Activated naive CD4-positive, alpha-beta T cell treated with anti-CD3 and anti-CD28 coated beads for 36 hours (primary cell): ENCODE measurements at regions of chr12 and their contacts with region 1.

Region 1: GRCh38 chr12:76920172-76921014 is 41.6 kb upstream of the CSRP2 start:
- DNase-seq: peak; percentile 45
- H3K4me3 Mint-ChIP-seq: no peak overlapping the region
- H3K27ac Mint-ChIP-seq: no peak overlapping the region
- H3K4me1 Mint-ChIP-seq: peaks cover 6% of the 10 kb centered on the region
- H3K27me3 Mint-ChIP-seq: peaks cover 2% of the 10 kb centered on the region

Region 2: GRCh38 chr12:76890151-76891143 is 29.9 kb before region 1 on chr12:
- CTCF ChIA-PET with region 1: no interaction called
- intact Hi-C with region 1: loop called (anchors 2 kb)
- DNase-seq: peak; percentile 79
- H3K4me3 Mint-ChIP-seq: no peak overlapping the region
- H3K27ac Mint-ChIP-seq: peak overlapping the region; percentile 18
- H3K4me1 Mint-ChIP-seq: peaks cover 13% of the 10 kb centered on the region
- H3K27me3 Mint-ChIP-seq: no peaks in the 10 kb centered on the region

Region 3: GRCh38 chr12:76932196-76932595 is 11.8 kb after region 1 on chr12:
- CTCF ChIA-PET with region 1: no interaction called
- intact Hi-C with region 1: no loop called
- DNase-seq: no peak
- H3K4me3 Mint-ChIP-seq: no peak overlapping the region
- H3K27ac Mint-ChIP-seq: no peak overlapping the region
- H3K4me1 Mint-ChIP-seq: no peaks in the 10 kb centered on the region
- H3K27me3 Mint-ChIP-seq: peaks cover 8% of the 10 kb centered on the region